Left colon (tissue), 2 donors: ENCODE measurements at regions of chr15 and their contacts with region 1.

Region 1: GRCh38 chr15:45611305-45611704 is 23.5 kb upstream of the SQOR start:
- DNase-seq: no peak
- ATAC-seq: no peak

Region 2: GRCh38 chr15:45230246-45230965 is 380.9 kb before region 1 on chr15:
- intact Hi-C with region 1: no loop called
- DNase-seq: no peak
- ATAC-seq: no peak

Region 3: GRCh38 chr15:45457641-45458433 is 153.5 kb before region 1 on chr15:
- intact Hi-C with region 1: loop called in 1 of 2 experiments (anchors 5 kb)
- DNase-seq: peak; percentile 62 to 72
- ATAC-seq: peak; percentile 61

Region 4: DNA sequence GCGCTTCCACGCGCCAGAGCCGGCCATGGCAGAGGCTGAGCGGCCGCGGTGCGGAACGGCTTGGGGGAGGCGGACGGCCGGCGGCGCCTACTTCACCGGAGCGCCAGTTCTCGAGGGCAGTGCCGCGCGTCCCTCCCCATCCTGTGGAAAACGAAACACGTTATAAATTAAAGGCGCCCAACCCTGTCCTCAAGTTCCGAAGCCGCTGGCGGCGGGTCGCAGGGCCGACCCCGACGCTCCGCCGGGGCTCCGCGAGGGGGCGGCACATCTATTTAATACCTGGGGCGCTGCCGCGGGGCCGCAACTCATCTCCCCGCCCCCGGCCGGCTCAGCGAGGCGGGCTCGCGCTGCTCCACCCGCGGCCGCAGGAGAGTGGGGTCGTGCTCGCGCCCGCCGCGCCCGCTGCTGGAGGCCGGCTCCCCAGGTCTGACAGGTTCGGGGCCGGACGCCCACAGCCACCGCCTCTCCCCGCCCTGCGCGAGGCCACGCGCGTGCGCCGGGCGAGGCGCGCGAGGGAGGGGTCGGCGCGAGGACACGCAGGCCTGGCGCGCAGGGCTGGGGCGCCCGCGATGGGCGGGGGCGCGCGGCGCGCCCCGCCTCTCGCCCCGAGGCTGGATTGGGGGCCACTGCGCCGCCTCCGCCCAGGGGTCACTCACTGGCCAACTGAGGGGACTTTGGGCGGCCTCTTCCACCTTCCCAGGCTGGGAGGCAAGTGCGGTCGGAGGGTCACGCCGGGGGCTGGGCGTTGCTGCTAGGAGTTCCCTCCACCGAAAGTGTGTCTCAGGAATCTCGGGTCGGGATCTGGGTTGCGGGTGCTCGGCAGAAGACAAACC is 88.8 kb before region 1 on chr15 and contains the start of gene SLC30A4:
- intact Hi-C with region 1: loop called in 1 of 2 experiments (anchors 5 kb)
- DNase-seq: peak; percentile 64 to 79
- ATAC-seq: peak; percentile 81
- total RNA-seq, gene SLC30A4: 14.5 to 18.3 TPM